ENCODE measurements at regions of chr5 and their contacts with region 1.

Region 1: GRCh38 chr5:160342403-160342941 is 28.0 kb downstream of the C1QTNF2 start:
- DNase-seq: no peak
- H3K4me3 ChIP-seq: no peak overlapping the region
- H3K27ac ChIP-seq: no peak overlapping the region
- H3K4me1 ChIP-seq: peaks cover 0 to 5% (median 4%) of the 10 kb centered on the region in 4 experiments; a peak in 5 of 7 replicates
- H3K27me3 ChIP-seq: no peaks in the 10 kb centered on the region; a peak in 1 of 7 replicates
- CTCF ChIP-seq: no peak
- EP300 ChIP-seq: no peak
- POLR2A ChIP-seq: no peak
- RAD21 ChIP-seq: no peak

Region 2: GRCh38 chr5:160082614-160083500 is 259.6 kb before region 1 on chr5:
- CTCF ChIA-PET with region 1: interaction called, 38 read pairs
- POLR2A ChIA-PET with region 1: interaction called, 3 read pairs
- DNase-seq: no peak
- H3K4me3 ChIP-seq: no peak overlapping the region
- H3K27ac ChIP-seq: 0 out of 2 replicates have a peak overlapping the region, but pooled peaks have one; percentile 11
- H3K4me1 ChIP-seq: peaks cover 0 to 10% (median 0%) of the 10 kb centered on the region in 4 experiments; a peak in 2 of 7 replicates
- H3K27me3 ChIP-seq: no peaks in the 10 kb centered on the region
- CTCF ChIP-seq: no peak
- EP300 ChIP-seq: no peak
- POLR2A ChIP-seq: no peak
- RAD21 ChIP-seq: no peak

Region 3: GRCh38 chr5:160230686-160231527 is 111.6 kb before region 1 on chr5:
- CTCF ChIA-PET with region 1: interaction called, 12 read pairs
- POLR2A ChIA-PET with region 1: no interaction called
- DNase-seq: no peak
- H3K4me3 ChIP-seq: no peak overlapping the region
- H3K27ac ChIP-seq: no peak overlapping the region
- H3K4me1 ChIP-seq: peaks cover 0 to 6% (median 2%) of the 10 kb centered on the region in 4 experiments; a peak in 3 of 7 replicates
- H3K27me3 ChIP-seq: no peaks in the 10 kb centered on the region
- CTCF ChIP-seq: no peak
- EP300 ChIP-seq: no peak
- POLR2A ChIP-seq: no peak
- RAD21 ChIP-seq: no peak

Region 4: DNA sequence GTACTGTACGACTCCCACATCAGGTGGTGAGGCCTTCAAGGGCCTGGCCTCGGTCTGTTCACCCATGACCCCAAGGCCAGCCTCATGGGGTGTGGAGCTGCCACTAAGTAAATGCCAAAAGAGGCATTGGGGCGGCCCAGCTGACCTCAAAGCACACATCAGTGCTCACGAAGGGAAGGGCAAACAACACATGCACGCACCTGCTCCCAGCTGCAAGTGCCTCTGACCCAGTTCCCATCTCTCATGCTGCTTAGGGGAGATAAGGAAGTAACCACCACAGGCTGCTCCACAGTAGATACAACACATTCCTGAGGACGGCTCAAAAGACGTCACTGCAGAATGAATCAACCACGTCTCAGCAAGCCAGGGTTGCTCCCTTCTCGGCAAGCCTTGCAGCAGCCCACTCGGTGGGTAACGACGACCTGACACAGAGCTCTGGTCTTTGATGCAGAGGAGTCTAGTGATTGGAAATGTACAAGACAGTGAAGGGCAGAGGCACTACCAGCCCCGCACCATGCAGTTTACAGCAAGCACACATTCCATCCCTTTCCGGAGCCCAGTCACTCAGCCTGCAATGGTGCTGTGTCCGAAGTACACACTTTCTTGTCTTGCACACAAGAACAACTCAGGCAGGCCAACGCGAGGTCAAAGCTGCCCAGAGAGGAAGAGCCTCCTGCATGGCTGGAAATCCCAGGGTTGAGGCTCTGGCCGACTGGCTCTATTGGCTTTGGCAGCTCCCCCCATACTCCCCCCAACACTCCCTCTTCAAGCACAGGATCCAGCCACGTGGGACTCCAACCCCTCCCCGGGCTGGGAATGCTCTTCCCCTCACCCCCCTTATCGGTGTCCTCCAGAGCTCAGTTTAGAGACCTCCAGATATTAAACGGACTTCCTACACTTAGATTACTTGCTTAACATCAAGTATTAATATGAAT is 81.3 kb before region 1 on chr5:
- CTCF ChIA-PET with region 1: interaction called, 113 read pairs
- POLR2A ChIA-PET with region 1: no interaction called
- DNase-seq: no peak
- H3K4me3 ChIP-seq: no peak overlapping the region
- H3K27ac ChIP-seq: no peak overlapping the region
- H3K4me1 ChIP-seq: peaks cover 2 to 25% (median 17%) of the 10 kb centered on the region in 4 experiments
- H3K27me3 ChIP-seq: no peaks in the 10 kb centered on the region
- CTCF ChIP-seq: no peak
- EP300 ChIP-seq: no peak
- POLR2A ChIP-seq: no peak
- RAD21 ChIP-seq: no peak

Region 5: DNA sequence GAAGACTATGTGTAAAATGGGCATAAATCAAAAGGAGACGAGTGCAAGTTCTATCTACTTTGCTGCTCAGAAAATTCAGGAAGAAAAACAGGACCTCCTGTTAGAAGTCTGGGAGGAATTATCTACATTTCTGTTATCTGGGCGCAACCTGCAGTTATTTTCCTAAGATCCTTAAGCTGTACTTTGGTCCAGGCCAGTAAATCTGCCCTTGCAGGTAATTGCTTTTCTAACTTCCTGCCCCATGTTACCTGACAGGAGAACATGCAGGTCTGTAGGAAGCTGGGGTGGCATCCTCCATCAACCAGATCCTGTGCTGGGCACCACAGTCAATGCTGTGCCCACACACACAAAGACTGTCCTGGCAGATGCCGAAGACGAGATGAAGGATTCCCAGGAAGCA is 35.8 kb before region 1 on chr5:
- CTCF ChIA-PET with region 1: interaction called, 20 read pairs
- POLR2A ChIA-PET with region 1: interaction called, 5 read pairs
- DNase-seq: no peak
- H3K4me3 ChIP-seq: no peak overlapping the region
- H3K27ac ChIP-seq: no peak overlapping the region
- H3K4me1 ChIP-seq: peaks cover 2 to 5% (median 4%) of the 10 kb centered on the region in 4 experiments; a peak in 5 of 7 replicates
- H3K27me3 ChIP-seq: no peaks in the 10 kb centered on the region
- CTCF ChIP-seq: no peak
- EP300 ChIP-seq: no peak
- POLR2A ChIP-seq: no peak
- RAD21 ChIP-seq: no peak

Region 6: DNA sequence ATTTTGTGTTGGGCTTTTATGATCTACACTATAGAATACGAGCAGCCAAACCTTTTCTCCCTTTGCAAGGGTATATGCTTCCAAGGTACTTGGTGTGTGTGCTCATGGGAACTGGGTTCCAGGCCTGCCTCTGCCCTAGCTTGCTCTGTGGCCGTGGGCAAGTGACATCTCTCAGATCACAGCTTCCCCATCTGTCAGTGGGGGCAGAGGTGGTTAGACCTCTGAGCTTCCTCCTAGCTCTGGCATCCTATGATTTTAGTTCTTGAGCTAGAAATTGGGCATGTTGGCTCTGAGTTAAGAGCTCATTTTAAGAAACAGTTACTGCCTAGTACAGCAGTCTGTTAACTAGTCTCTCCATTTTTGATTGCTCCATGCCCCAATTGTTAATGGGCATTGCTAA is 17.6 kb before region 1 on chr5:
- CTCF ChIA-PET with region 1: interaction called, 18 read pairs
- POLR2A ChIA-PET with region 1: interaction called, 9 read pairs
- DNase-seq: no peak
- H3K4me3 ChIP-seq: no peak overlapping the region
- H3K27ac ChIP-seq: no peak overlapping the region
- H3K4me1 ChIP-seq: peaks cover 0 to 3% (median 0%) of the 10 kb centered on the region in 4 experiments; a peak in 1 of 7 replicates
- H3K27me3 ChIP-seq: no peaks in the 10 kb centered on the region
- CTCF ChIP-seq: no peak
- EP300 ChIP-seq: no peak
- POLR2A ChIP-seq: no peak
- RAD21 ChIP-seq: no peak

Region 7: DNA sequence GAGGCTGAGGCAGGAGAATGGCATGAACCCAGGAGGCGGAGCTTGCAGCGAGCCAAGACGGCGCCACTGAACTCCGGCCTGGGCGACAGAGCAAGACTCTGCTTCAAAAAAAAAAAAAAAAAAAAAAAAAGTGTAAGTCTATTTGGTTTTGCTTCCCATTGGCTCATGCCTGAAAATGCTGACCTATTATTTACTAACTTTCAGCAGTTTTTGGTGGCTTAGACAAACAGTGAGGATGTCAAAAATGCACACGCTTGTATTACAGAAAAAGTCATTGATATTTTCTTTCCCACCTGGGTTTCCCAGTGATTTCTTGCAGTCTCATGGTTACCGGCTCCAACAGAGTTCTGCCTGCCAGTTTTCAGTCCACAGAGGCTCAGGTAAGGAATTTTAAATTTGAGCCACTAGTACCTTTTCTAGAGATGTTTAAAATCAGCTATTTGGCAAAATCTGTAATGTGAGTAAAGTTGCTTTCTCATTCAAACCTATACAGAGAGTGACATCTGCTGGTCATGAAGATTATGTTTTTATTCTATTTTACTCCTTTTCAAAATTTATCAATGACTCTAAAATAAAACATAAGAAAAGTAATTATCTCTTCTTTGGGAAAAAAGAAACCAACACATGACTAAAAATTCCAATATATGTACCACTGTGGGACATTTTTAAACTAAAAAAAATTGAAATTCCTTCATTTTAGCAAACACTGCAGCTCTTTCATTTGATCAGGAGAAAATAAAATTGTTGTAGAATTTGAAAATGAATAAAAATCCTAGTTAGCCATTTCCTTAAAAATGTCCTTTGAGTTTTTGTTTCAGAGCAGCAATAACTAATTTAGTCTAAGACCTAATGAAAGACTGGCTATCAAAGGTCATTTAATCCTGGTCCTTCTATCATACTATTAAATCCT is 48.6 kb after region 1 on chr5:
- CTCF ChIA-PET with region 1: interaction called, 38 read pairs
- POLR2A ChIA-PET with region 1: no interaction called
- DNase-seq: no peak
- H3K4me3 ChIP-seq: no peak overlapping the region
- H3K27ac ChIP-seq: no peak overlapping the region
- H3K4me1 ChIP-seq: no peaks in the 10 kb centered on the region
- H3K27me3 ChIP-seq: peaks cover 0 to 1% (median 0%) of the 10 kb centered on the region in 4 experiments; a peak in 1 of 7 replicates
- CTCF ChIP-seq: peak in 2 of 3 experiments; percentile 13 to 29; a peak in 2 of 4 replicates
- EP300 ChIP-seq: no peak
- POLR2A ChIP-seq: no peak
- RAD21 ChIP-seq: peak; percentile 53 to 68

Region 8: DNA sequence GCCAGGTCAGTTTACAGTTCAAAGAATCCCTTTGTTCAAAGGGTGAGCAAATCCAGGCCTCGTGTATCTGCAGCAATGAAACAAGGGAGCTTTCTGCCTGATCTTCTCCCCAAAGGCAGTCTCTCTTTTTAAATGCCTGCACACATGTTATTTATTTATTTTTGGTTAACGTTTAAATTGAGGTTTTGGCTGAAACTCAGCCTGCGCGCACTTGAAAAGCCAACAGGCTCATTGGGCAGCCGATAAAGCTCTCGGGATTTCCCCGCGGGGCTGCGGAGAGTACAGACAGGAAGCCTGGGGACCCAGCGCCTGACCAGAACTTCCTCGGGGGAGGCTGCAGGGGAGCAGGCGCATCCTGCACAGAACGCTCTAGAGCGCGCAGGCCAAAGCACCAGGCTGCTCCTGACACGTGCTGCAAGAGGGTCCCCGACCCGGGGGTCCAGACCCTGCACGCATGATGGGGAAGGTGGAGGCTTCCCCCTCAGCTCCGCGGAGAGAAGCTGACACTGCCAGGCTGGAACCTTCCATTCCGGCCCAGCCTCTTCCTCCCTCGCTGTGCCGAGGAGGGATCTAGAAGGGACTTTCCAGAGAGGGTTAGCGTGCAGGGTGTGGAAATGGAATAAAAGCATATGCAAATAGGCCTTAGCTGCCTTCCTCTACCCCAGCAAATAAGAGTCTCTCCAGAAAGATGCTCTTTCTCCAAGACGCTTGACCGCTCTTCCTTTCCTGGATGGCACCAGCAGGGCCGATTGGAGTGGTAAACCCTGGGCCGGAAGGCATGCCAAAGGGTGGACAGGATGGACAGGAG is 125.3 kb after region 1 on chr5:
- CTCF ChIA-PET with region 1: no interaction called
- POLR2A ChIA-PET with region 1: no interaction called
- DNase-seq: peak in 1 of 2 experiments; percentile 63
- H3K4me3 ChIP-seq: no peak overlapping the region
- H3K27ac ChIP-seq: no peak overlapping the region
- H3K4me1 ChIP-seq: peaks cover 0 to 6% (median 2%) of the 10 kb centered on the region in 4 experiments; a peak in 4 of 7 replicates
- H3K27me3 ChIP-seq: no peaks in the 10 kb centered on the region
- CTCF ChIP-seq: no peak
- EP300 ChIP-seq: no peak
- POLR2A ChIP-seq: no peak
- RAD21 ChIP-seq: no peak

Region 9: DNA sequence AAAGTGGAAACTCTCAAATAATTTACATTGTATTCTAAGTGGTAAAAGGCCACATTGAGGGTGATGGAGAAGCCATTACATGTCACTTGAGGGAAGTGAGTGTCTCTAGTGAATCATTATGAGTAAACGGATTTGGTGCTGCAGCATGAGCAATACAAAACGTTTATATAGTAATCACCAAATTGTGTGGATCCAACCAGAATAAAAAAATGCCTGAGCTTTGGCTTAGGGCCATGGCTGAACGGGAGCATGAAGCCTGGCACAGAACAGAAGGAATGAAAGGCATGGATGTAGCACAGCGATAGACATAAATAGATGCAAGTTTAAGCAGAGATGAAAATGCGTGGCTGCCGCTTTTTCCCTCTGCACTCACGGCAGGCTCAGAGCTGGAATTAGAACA is 137.5 kb after region 1 on chr5:
- CTCF ChIA-PET with region 1: no interaction called
- POLR2A ChIA-PET with region 1: no interaction called
- DNase-seq: no peak
- H3K4me3 ChIP-seq: no peak overlapping the region
- H3K27ac ChIP-seq: no peak overlapping the region
- H3K4me1 ChIP-seq: peaks cover 1 to 12% (median 9%) of the 10 kb centered on the region in 4 experiments; a peak in 6 of 7 replicates
- H3K27me3 ChIP-seq: no peaks in the 10 kb centered on the region
- CTCF ChIP-seq: no peak
- EP300 ChIP-seq: no peak
- POLR2A ChIP-seq: no peak
- RAD21 ChIP-seq: no peak

Measured in H1 (cell line).